ENCODE measurements at regions of chr3 and their contacts with region 1.

Region 1: GRCh38 chr3:134600685-134601463 is 49.9 kb downstream of the KY start:
- DNase-seq: peak; percentile 87
- H3K4me3 ChIP-seq: 0 out of 2 replicates have a peak overlapping the region, but pooled peaks have one; percentile 30
- H3K27ac ChIP-seq: no peak overlapping the region
- H3K4me1 ChIP-seq: no peaks in the 10 kb centered on the region
- H3K27me3 ChIP-seq: no peaks in the 10 kb centered on the region

Region 2: GRCh38 chr3:134749802-134750553 is 149.1 kb after region 1 on chr3:
- in situ Hi-C with region 1: loop called (anchors 10 kb)
- DNase-seq: no peak
- H3K4me3 ChIP-seq: no peak overlapping the region
- H3K27ac ChIP-seq: no peak overlapping the region
- H3K4me1 ChIP-seq: no peaks in the 10 kb centered on the region
- H3K27me3 ChIP-seq: no peaks in the 10 kb centered on the region

Region 3: GRCh38 chr3:134761213-134761612 is 160.3 kb after region 1 on chr3:
- in situ Hi-C with region 1: no loop called
- DNase-seq: no peak
- H3K4me3 ChIP-seq: no peak overlapping the region
- H3K27ac ChIP-seq: no peak overlapping the region
- H3K4me1 ChIP-seq: no peaks in the 10 kb centered on the region
- H3K27me3 ChIP-seq: 0 out of 2 replicates have a peak, but pooled peaks cover 4% of the 10 kb centered on the region

Region 4: DNA sequence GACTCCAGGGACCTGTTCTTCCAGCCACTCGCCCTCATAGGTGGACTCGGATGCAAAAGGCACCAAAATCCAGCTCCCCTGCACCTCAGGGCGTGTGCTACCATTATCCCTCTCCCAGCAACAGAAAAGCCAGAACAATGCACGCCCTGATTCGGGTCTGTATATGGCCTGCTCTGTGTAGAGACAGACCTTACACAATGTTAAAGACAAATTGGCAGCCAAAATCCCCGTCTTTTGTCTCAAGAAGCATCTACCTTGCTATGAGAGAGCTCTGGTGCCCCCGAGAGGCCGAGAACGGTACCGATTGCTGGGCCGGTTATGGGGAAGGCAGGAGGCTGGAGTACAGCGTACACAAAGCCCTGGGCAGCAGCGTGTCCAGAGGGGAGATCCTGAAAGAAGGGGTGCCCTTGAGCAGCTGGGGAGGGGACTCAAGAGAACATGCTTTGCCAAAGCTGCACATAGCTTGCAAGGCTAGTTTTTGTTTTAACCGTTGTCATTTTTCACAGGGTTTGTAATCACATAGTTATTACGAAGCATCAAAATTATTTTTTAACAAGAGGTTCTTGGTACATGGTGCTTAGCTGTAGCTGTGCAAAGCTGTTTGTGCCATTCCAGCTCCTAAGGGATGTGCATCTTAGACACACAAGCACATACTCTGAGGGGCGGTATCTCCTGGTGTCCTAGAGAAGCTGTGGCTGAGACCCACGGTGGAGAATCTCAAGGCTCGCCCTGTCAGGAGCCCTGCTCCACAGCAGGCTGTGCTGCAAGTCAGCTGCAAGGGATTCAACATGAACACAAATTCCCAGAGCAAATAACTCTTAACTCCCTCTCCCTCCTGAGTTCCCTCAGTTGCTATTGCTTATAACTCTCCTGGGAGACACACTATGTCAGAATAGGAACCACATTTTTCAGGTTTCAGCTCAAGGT is 903.1 kb after region 1 on chr3:
- in situ Hi-C with region 1: loop called (anchors 25 kb)
- DNase-seq: peak; percentile 79
- H3K4me3 ChIP-seq: no peak overlapping the region
- H3K27ac ChIP-seq: no peak overlapping the region
- H3K4me1 ChIP-seq: no peaks in the 10 kb centered on the region
- H3K27me3 ChIP-seq: peaks cover 18% of the 10 kb centered on the region

Region 5: GRCh38 chr3:135895106-135895733 is 1294.3 kb after region 1 on chr3:
- in situ Hi-C with region 1: loop called (anchors 25 kb)
- DNase-seq: peak; percentile 89
- H3K4me3 ChIP-seq: no peak overlapping the region
- H3K27ac ChIP-seq: peak overlapping the region; percentile 62
- H3K4me1 ChIP-seq: peaks cover 29% of the 10 kb centered on the region
- H3K27me3 ChIP-seq: no peaks in the 10 kb centered on the region

Measured in GM23248 (cell line).